ENCODE measurements at regions of chr20 and their contacts with region 1.

Region 1: GRCh38 chr20:19644085-19644484 is 114.0 kb upstream of the RIN2 start:
- DNase-seq: no peak
- H3K4me3 ChIP-seq: no peak overlapping the region
- H3K27ac ChIP-seq: no peak overlapping the region
- H3K4me1 ChIP-seq: no peaks in the 10 kb centered on the region
- H3K27me3 ChIP-seq: peaks cover 2 to 4% of the 10 kb centered on the region in 2 experiments
- CTCF ChIP-seq: no peak
- POLR2A ChIP-seq: no peak

Region 2: GRCh38 chr20:19487454-19487853 is 156.6 kb before region 1 on chr20:
- CTCF ChIA-PET with region 1: no interaction called
- POLR2A ChIA-PET with region 1: no interaction called
- dilution Hi-C with region 1: no loop called
- intact Hi-C with region 1: no loop called
- DNase-seq: no peak
- H3K4me3 ChIP-seq: no peak overlapping the region
- H3K27ac ChIP-seq: no peak overlapping the region
- H3K4me1 ChIP-seq: no peaks in the 10 kb centered on the region
- H3K27me3 ChIP-seq: no peaks in the 10 kb centered on the region
- CTCF ChIP-seq: no peak
- POLR2A ChIP-seq: no peak

Region 3: DNA sequence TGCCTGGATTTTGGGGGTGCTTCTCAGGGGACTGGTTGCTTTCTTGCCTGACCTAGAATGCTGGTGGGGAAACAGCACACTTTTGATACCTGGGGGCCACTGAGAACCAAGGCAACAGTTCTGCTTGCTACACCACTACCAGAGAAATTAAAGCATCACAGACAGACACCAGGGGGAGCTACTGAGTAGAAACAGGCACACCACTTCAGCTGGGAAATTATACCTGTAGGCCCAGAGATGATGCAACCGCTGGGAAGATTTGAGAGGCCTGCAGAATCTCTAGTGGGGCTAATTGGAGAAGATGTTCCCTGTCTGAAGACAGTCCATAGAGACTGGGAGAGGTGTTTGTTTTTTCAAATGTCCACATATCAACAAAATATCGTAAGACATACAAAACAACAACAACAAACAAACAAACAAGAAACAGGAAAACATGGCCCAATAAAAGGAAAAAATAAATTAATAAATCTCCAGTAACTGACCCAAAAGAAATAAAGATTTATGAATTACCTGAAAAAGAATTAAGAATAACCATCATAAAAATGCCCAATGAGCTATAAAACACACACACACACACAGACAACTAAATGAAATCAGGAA is 15.4 kb before region 1 on chr20:
- CTCF ChIA-PET with region 1: interaction called, 26 read pairs
- POLR2A ChIA-PET with region 1: no interaction called
- dilution Hi-C with region 1: no loop called
- intact Hi-C with region 1: no loop called
- DNase-seq: peak; percentile 66
- H3K4me3 ChIP-seq: no peak overlapping the region
- H3K27ac ChIP-seq: no peak overlapping the region
- H3K4me1 ChIP-seq: no peaks in the 10 kb centered on the region
- H3K27me3 ChIP-seq: peaks cover 0 to 1% of the 10 kb centered on the region in 2 experiments
- CTCF ChIP-seq: peak; percentile 70 to 73
- POLR2A ChIP-seq: no peak

Region 4: GRCh38 chr20:19789446-19789845 is 145.4 kb after region 1 on chr20:
- CTCF ChIA-PET with region 1: no interaction called
- POLR2A ChIA-PET with region 1: no interaction called
- dilution Hi-C with region 1: no loop called
- intact Hi-C with region 1: no loop called
- DNase-seq: no peak
- H3K4me3 ChIP-seq: no peak overlapping the region
- H3K27ac ChIP-seq: no peak overlapping the region
- H3K4me1 ChIP-seq: peaks cover 24% of the 10 kb centered on the region
- H3K27me3 ChIP-seq: no peaks in the 10 kb centered on the region
- CTCF ChIP-seq: no peak
- POLR2A ChIP-seq: no peak

Measured in endothelial cell of umbilical vein (primary cell).